ENCODE measurements at regions of chr6 and their contacts with region 1.

Region 1: DNA sequence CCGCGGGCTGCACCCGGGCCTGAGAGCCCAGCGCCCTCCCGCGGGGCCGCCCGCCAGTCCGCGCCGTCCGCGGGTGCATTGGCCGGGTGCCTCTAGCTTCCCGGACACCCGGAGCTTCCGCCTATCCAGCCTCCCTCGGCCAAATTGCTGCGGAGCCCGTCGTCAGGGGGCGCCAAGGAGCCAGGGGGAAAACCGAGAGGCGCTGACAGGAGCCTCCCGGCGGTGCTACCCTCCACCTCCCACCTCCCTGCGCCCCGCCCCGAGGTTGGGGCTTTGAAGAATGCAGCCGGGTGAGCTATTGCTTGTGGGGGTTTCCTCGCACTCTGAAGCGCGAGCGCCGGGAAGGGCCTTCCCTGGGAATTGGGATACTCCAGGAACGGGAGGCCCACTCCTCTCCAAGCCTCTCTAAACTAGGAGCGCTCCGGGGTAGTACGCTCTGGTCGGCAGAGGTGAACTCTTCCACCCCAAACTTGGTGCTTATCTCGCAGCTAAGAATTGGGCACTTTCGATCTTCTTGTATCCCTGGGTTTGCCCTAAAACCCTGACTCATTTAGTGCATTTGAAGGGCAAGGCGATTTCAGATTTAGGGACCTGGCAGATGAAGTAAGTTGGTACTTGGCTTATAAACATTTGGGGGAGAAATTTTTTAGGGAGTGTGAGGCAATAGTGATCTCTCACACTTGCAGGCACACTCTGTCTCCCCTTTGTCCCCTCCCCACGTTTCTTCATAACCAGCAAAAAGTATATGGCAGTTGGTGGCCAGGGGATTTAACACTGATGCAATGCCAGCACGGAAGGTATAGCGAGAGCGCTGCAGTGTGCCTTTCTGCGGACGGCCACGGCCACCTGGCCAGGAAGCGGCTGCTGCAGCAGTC is 501 bp downstream of the BEND6 start:
- DNase-seq: peak; percentile 92
- H3K4me3 Mint-ChIP-seq: peak overlapping the region; percentile 97
- H3K27ac Mint-ChIP-seq: peak overlapping the region; percentile 29
- H3K4me1 Mint-ChIP-seq: peaks cover 13% of the 10 kb centered on the region
- H3K27me3 Mint-ChIP-seq: no peaks in the 10 kb centered on the region
- CTCF ChIP-seq: peak; percentile 77

Region 2: DNA sequence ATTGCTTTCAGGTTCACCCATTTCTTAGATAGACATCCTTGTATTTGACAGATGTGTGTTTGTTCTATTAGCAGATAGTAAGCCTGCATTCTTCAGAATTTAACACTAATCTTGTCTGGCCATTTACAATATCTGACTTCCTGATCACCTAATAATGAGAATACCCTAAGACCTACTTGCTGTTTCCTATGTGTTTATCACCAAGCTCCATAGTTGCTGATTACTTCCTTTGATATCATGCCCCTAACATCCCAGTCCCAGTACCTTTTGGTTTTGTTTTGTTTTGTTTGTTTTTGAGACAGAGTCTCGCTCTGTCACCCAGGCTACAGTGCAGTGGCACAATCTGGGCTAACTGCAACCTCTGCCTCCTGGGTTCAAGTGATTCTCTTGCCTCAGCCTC is 169.2 kb before region 1 on chr6:
- CTCF ChIA-PET with region 1: no interaction called
- POLR2A ChIA-PET with region 1: no interaction called
- intact Hi-C with region 1: no loop called
- DNase-seq: no peak
- H3K4me3 Mint-ChIP-seq: no peak overlapping the region
- H3K27ac Mint-ChIP-seq: no peak overlapping the region
- H3K4me1 Mint-ChIP-seq: peaks cover 12% of the 10 kb centered on the region
- H3K27me3 Mint-ChIP-seq: no peaks in the 10 kb centered on the region
- CTCF ChIP-seq: no peak

Region 3: DNA sequence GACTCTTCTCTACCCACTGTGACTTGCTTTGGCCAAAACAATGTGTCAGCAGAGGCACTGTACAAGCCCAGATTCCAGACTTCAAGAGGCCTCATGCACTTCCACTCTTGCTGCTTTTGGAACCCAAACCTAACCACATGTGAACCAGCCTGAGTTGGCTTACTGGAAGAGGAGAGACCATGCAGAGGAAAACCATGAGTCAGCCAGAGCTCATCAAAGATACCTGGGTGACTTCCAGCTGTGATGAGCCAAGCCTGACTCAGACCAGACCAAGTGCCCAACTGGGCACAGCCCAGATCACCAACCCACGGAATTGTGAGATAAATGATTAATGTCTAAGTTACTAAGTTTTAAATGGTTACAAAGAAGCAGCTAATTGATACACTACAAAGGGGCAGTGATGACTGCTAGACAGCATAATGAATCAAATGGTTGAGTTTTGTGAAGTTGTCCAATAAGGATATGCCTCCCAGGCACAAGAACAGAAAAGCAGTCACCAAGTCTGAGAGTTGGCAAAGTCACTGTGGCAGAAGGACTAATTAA is 16.7 kb before region 1 on chr6:
- CTCF ChIA-PET with region 1: interaction called, 11 read pairs
- POLR2A ChIA-PET with region 1: interaction called, 21 read pairs
- intact Hi-C with region 1: loop called (anchors 1 kb)
- DNase-seq: peak; percentile 100
- H3K4me3 Mint-ChIP-seq: peak overlapping the region; percentile 8
- H3K27ac Mint-ChIP-seq: peak overlapping the region; percentile 17
- H3K4me1 Mint-ChIP-seq: peaks cover 15% of the 10 kb centered on the region
- H3K27me3 Mint-ChIP-seq: no peaks in the 10 kb centered on the region
- CTCF ChIP-seq: no peak

Region 4: GRCh38 chr6:57013521-57013926 is 58.1 kb after region 1 on chr6:
- CTCF ChIA-PET with region 1: interaction called, 69 read pairs
- POLR2A ChIA-PET with region 1: interaction called, 5 read pairs
- intact Hi-C with region 1: loop called (anchors 2 kb)
- DNase-seq: peak; percentile 91
- H3K4me3 Mint-ChIP-seq: peak overlapping the region; percentile 23
- H3K27ac Mint-ChIP-seq: peak overlapping the region; percentile 27
- H3K4me1 Mint-ChIP-seq: peaks cover 12% of the 10 kb centered on the region
- H3K27me3 Mint-ChIP-seq: no peaks in the 10 kb centered on the region
- CTCF ChIP-seq: no peak

Region 5: GRCh38 chr6:57021086-57021720 is 65.8 kb after region 1 on chr6:
- CTCF ChIA-PET with region 1: interaction called, 69 read pairs
- POLR2A ChIA-PET with region 1: interaction called, 5 read pairs
- intact Hi-C with region 1: loop called (anchors 1 kb)
- DNase-seq: peak; percentile 42
- H3K4me3 Mint-ChIP-seq: no peak overlapping the region
- H3K27ac Mint-ChIP-seq: no peak overlapping the region
- H3K4me1 Mint-ChIP-seq: no peaks in the 10 kb centered on the region
- H3K27me3 Mint-ChIP-seq: no peaks in the 10 kb centered on the region
- CTCF ChIP-seq: peak; percentile 38